Heart right ventricle (tissue), 16 donors: ENCODE measurements at regions of chr11 and their contacts with region 1.

Region 1: GRCh38 chr11:22244986-22245592 is 52.2 kb downstream of the ANO5 start:
- DNase-seq: peak; percentile 11 to 13
- ATAC-seq: peak; percentile 38 to 77 (median 62)
- H3K4me3 ChIP-seq: no peak overlapping the region
- H3K27ac ChIP-seq: no peak overlapping the region
- H3K4me1 ChIP-seq: peaks cover 0 to 2% (median 0%) of the 10 kb centered on the region in 9 donors
- H3K27me3 ChIP-seq: no peaks in the 10 kb centered on the region
- CTCF ChIP-seq: peak; percentile 33 to 71 (median 59)

Region 2: GRCh38 chr11:22192642-22193347 is 52.3 kb before region 1 on chr11 and contains the start of gene ANO5:
- intact Hi-C with region 1: loop called in 1 of 10 experiments (anchors 10 kb)
- DNase-seq: peak; percentile 78
- ATAC-seq: peak; percentile 90 to 95 (median 94)
- H3K4me3 ChIP-seq: peak within 1 kb of the TSS; percentile 38 to 76 (median 63)
- H3K27ac ChIP-seq: peak within 1 kb of the TSS; percentile 62 to 93 (median 83)
- H3K4me1 ChIP-seq: peaks cover 0 to 28% (median 8%) of the 10 kb centered on the region in 9 donors
- H3K27me3 ChIP-seq: peaks cover 0 to 22% (median 0%) of the 10 kb centered on the region in 7 donors
- CTCF ChIP-seq: no peak
- total RNA-seq, gene ANO5: 51.3 to 83.0 (median 60.6) TPM

Region 3: GRCh38 chr11:22234743-22235142 is 10.3 kb before region 1 on chr11:
- intact Hi-C with region 1: loop called in 1 of 10 experiments (anchors 1 kb)
- DNase-seq: no peak
- ATAC-seq: no peak
- H3K4me3 ChIP-seq: no peak overlapping the region
- H3K27ac ChIP-seq: no peak overlapping the region
- H3K4me1 ChIP-seq: peaks cover 0 to 3% (median 0%) of the 10 kb centered on the region in 9 donors
- H3K27me3 ChIP-seq: no peaks in the 10 kb centered on the region
- CTCF ChIP-seq: no peak